ENCODE measurements at regions of chr7 and their contacts with region 1.

Region 1: GRCh38 chr7:24637706-24638105 is 64.5 kb downstream of the PALS2 start:
- DNase-seq: no peak
- ATAC-seq: no peak
- H3K4me3 ChIP-seq: no peak overlapping the region
- H3K4me3 Mint-ChIP-seq: no peak overlapping the region
- H3K27ac ChIP-seq: no peak overlapping the region
- H3K27ac Mint-ChIP-seq: no peak overlapping the region
- H3K4me1 ChIP-seq: no peaks in the 10 kb centered on the region
- H3K4me1 Mint-ChIP-seq: peaks cover 0 to 5% (median 0%) of the 10 kb centered on the region in 3 donors
- H3K27me3 ChIP-seq: no peaks in the 10 kb centered on the region
- H3K27me3 Mint-ChIP-seq: no peaks in the 10 kb centered on the region

Region 2: GRCh38 chr7:24653316-24654085 is 15.8 kb after region 1 on chr7:
- CTCF ChIA-PET with region 1: interaction called in 1 of 2 experiments, 3 read pairs
- POLR2A ChIA-PET with region 1: interaction called, 5 to 10 read pairs
- DNase-seq: no peak
- ATAC-seq: no peak
- H3K4me3 ChIP-seq: peak overlapping the region in 1 of 2 donors; percentile 8
- H3K4me3 Mint-ChIP-seq: peak overlapping the region; percentile 51 to 62 (median 52)
- H3K27ac ChIP-seq: no peak overlapping the region
- H3K27ac Mint-ChIP-seq: peak overlapping the region in 1 of 2 donors; percentile 39
- H3K4me1 ChIP-seq: no peaks in the 10 kb centered on the region
- H3K4me1 Mint-ChIP-seq: peaks cover 10 to 20% (median 14%) of the 10 kb centered on the region in 3 donors
- H3K27me3 ChIP-seq: no peaks in the 10 kb centered on the region
- H3K27me3 Mint-ChIP-seq: no peaks in the 10 kb centered on the region